Activated CD4-positive, alpha-beta memory T cell treated with anti-CD3 and anti-CD28 coated beads for 36 hours (primary cell): ENCODE measurements at regions of chr11 and their contacts with region 1.

Region 1: DNA sequence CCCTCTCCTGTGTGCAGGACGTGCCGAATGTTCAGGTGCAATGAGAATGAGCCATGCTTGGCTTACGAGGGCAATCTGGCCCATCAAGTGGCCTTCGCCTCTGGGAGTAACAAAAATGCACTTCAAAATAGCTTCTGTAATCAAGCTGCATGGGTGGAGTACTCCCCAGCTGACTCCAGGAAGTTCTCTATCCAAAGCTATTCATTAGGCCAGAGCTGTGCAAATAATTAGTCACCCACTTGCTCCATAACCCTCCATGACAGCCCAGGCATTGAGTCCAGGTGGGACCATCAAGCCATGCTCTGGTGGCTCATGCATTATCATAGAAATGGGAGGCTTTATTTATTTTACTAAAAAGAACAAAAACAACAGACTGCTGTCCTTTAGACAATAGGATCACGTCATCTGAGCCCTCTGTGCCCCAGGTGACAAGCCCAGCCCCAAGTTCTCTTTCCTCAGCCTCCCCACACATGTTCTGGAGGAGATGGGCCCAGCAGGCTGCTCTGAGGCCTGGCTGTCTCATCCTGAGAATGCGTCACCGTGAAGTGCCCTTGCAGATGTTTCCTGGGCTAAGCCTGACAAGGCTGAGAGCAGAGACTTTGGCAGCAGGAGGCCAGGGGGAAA is 244.7 kb downstream of the ETS1 start:
- DNase-seq: peak; percentile 93
- H3K4me3 Mint-ChIP-seq: peak overlapping the region; percentile 66
- H3K27ac Mint-ChIP-seq: peak overlapping the region; percentile 88
- H3K4me1 Mint-ChIP-seq: peaks cover 88% of the 10 kb centered on the region
- H3K27me3 Mint-ChIP-seq: no peaks in the 10 kb centered on the region

Region 2: DNA sequence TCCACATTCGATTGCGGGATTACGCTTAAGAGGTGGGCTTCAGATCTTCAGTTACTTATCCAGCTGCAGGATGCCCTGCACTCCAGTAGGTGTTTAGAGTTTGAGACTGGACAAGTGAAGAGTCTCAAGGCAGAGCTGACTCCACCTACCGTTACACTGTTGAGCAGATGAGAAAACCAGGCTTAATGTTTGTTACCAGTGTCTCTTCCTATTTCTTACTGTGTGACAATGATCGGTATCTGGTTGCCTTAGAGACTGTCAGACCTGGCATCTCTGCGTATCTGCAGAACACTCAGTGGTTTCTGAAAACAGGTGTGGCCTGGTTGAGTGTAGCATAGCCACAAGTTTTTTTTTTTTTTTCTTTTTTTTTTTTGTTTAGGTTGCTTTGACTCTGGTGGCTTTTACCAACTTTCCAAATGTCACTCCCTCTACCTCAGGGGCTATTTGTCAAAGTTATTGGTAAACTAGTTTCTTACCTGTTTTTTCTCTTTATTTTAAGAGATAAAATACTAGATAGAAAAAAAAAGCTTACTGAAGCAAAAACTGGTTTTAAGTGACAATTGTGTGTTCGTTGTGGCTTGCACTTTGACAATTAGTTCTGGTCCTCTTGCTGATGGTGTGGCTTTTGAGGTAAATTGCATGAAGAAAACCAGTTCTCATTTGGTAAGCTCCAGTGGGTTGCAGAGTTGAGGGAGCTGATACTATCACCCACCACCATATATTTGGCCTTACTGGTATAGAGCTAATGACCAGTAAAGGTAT is 40.0 kb before region 1 on chr11:
- CTCF ChIA-PET with region 1: interaction called, 11 read pairs
- POLR2A ChIA-PET with region 1: interaction called, 23 read pairs
- intact Hi-C with region 1: loop called (anchors 1 kb)
- DNase-seq: peak; percentile 81
- H3K4me3 Mint-ChIP-seq: peak overlapping the region; percentile 79
- H3K27ac Mint-ChIP-seq: peak overlapping the region; percentile 94
- H3K4me1 Mint-ChIP-seq: peaks cover 78% of the 10 kb centered on the region
- H3K27me3 Mint-ChIP-seq: no peaks in the 10 kb centered on the region

Region 3: GRCh38 chr11:128367573-128367972 is 24.9 kb after region 1 on chr11:
- CTCF ChIA-PET with region 1: interaction called, 4 read pairs
- POLR2A ChIA-PET with region 1: interaction called, 3 read pairs
- intact Hi-C with region 1: loop called (anchors 2 kb)
- DNase-seq: peak; percentile 75
- H3K4me3 Mint-ChIP-seq: peak overlapping the region; percentile 30
- H3K27ac Mint-ChIP-seq: no peak overlapping the region
- H3K4me1 Mint-ChIP-seq: peaks cover 24% of the 10 kb centered on the region
- H3K27me3 Mint-ChIP-seq: no peaks in the 10 kb centered on the region

Region 4: DNA sequence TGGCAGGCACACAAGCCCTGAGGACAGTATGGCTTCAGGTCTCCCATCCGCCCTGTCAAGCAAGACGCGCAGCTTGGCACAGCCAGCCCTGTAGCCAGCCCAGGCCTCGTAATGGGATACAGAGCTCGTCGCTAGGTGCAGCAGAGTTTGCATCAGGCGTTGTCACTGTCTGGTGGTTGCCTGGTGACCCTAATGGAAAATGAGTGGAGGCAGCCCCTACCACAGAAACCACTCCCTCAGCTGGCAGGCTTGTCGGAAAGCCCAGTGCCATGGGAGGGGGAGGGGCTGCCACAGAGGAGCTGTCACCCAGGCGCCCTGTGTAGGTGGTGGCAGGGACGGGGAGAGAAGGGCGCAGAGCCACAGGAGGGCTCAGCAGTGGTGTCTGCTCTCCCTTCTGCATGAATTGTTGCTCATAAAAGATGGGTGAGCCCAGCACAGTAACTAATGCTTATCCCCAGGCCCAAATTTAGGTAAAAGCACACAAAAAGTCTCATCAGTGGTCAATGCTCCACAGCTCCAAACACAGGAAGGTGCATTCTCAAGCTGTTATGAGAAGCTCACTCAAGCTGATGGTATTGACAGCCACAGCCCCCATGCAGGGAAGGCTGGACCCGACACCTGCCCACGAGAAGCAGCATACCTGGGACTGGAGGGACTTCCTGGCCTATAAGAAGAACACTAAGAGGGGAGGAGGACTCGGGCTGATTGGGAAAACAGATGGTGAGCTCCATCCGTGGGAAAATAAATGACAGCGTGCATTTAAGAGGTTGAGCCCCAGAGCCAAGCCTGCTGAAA is 80.2 kb after region 1 on chr11:
- CTCF ChIA-PET with region 1: no interaction called
- POLR2A ChIA-PET with region 1: interaction called, 8 read pairs
- intact Hi-C with region 1: loop called (anchors 1 kb)
- DNase-seq: peak; percentile 95
- H3K4me3 Mint-ChIP-seq: peak overlapping the region; percentile 49
- H3K27ac Mint-ChIP-seq: peak overlapping the region; percentile 65
- H3K4me1 Mint-ChIP-seq: peaks cover 34% of the 10 kb centered on the region
- H3K27me3 Mint-ChIP-seq: no peaks in the 10 kb centered on the region

Region 5: DNA sequence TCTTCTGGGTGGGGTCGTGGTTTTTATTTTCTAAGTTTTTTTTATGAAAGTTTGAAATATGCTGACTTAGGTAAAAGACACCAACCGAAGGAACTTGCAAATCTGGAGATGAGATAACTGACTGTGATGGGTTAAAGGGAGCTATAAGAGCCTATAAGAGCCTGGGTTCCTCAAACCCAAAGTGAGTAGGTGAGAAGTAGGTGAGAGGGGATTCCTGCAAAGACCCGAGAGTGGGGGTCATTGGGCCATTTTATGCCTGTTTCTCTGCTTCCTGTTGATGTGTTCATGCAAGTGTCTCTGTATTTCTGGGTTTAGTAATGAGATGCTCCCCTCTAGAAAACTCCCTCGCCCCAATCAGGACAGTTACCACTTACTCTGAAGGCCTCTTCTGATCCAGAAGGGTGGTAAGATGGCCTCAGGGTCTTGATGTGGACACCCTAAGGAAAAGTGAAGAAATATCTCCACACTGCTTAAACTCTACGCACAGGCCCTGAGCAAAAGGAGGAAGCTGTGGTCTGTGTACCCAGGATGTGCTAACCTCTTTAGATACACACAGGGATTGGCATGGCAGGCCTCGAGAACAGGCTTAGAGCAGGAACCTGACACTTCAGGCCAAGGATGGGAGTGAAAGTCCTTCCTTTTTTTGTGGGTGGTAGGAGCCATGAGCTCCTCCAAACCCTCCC is 353.1 kb after region 1 on chr11:
- CTCF ChIA-PET with region 1: no interaction called
- POLR2A ChIA-PET with region 1: no interaction called
- intact Hi-C with region 1: loop called (anchors 10 kb)
- DNase-seq: peak; percentile 55
- H3K4me3 Mint-ChIP-seq: peak overlapping the region; percentile 78
- H3K27ac Mint-ChIP-seq: peak overlapping the region; percentile 89
- H3K4me1 Mint-ChIP-seq: peaks cover 57% of the 10 kb centered on the region
- H3K27me3 Mint-ChIP-seq: peaks cover 5% of the 10 kb centered on the region